ENCODE measurements at regions of chr17 and their contacts with region 1.

Region 1: DNA sequence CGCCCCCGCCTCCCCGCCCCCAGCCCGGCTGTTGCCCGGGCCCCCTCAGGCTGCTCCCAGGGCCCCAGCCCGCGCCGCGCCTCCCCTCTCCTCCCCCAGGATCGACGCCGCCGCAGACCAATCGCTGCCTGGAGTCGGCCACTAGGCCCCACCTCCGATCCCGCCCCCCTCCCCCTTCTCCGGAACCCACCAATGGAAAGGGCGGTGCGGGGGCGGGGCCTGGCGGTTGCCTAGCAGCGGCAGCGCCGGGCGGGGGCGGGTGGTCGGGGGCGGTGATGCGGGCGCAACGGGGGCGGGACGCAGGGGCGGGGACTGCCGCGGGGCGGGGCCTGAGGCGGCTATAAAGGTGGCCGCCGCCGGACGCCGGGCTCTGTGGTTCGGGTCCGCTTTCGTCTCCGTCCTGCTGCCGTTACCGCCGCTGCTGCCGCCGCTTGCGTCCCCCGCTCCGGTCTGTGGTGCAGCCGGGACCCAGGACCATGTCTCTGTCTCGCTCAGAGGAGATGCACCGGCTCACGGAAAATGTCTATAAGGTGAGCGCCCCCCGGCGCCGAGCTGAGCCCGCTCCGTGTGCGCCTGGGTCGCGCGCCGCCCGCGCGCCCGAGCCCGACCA is at the start of gene BAIAP2:
- DNase-seq: peak; percentile 91
- ATAC-seq: peak; percentile 88
- H3K4me3 Mint-ChIP-seq: peak within 1 kb of the TSS; percentile 88
- H3K27ac Mint-ChIP-seq: peak within 1 kb of the TSS; percentile 69
- H3K4me1 Mint-ChIP-seq: peaks cover 12% of the 10 kb centered on the region
- H3K27me3 Mint-ChIP-seq: peaks cover 40% of the 10 kb centered on the region
- CTCF ChIP-seq: no peak
- total RNA-seq, gene BAIAP2: 5.3 and 6.8 TPM in 2 replicates

Region 2: GRCh38 chr17:80414803-80415625 is 619.9 kb before region 1 on chr17 and contains the start of gene ENDOV:
- CTCF ChIA-PET with region 1: no interaction called
- POLR2A ChIA-PET with region 1: no interaction called
- intact Hi-C with region 1: loop called (anchors 1 kb)
- DNase-seq: peak; percentile 90
- ATAC-seq: peak; percentile 88
- H3K4me3 Mint-ChIP-seq: peak within 1 kb of the TSS; percentile 89
- H3K27ac Mint-ChIP-seq: peak within 1 kb of the TSS; percentile 81
- H3K4me1 Mint-ChIP-seq: peaks cover 26% of the 10 kb centered on the region
- H3K27me3 Mint-ChIP-seq: peaks cover 17% of the 10 kb centered on the region
- CTCF ChIP-seq: no peak
- total RNA-seq, gene ENDOV: 26.8 and 28.1 TPM in 2 replicates

Measured in activated B cell treated with CpG ODN at 0.5 μM for 24 hours (primary cell).